Activated naive CD4-positive, alpha-beta T cell treated with anti-CD3 and anti-CD28 coated beads for 36 hours (primary cell): ENCODE measurements at regions of chr20 and their contacts with region 1.

Region 1: DNA sequence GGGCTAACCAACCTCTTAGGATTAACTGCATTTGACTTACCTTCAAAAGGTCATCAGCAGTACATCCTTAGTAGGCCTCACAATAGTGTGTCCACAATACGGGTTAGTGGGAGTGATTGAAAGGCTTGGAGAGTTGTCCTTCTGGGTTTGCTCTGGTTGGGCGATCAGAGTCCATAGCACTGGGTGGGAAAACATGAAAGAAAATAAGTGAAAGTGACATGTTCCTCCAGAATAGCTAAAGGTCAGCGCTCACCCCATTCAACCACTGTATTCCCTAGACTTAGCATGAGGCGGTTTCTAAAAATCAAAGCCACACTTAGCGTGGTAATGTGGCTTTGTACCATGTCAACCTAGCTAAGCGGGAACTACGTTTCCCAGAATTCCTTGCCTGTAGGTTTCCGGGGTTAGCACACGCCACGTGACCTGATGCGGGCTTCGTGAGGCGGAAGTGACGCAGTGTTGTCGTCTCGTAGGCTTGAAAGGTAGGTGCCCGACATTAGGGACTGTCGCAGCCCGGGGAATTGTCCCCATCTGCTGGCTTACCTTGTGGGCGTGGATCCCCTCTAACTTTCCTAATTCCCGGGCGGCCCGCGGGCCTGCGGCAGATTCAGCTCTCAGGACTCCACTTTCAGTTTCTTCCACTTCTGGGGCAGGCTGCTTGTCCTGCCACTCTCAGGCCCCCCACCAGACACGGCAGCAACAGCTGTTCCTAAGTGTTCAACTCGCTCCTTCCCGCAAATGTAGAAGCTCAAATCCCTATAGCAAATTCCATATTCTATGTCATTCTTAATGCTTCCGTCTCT is 19.8 kb upstream of the SCP2D1 start:
- DNase-seq: peak; percentile 93
- H3K4me3 Mint-ChIP-seq: peak overlapping the region; percentile 91
- H3K27ac Mint-ChIP-seq: peak overlapping the region; percentile 94
- H3K4me1 Mint-ChIP-seq: peaks cover 12% of the 10 kb centered on the region
- H3K27me3 Mint-ChIP-seq: peaks cover 8% of the 10 kb centered on the region

Region 2: GRCh38 chr20:18587665-18588573 is 205.9 kb before region 1 on chr20 and contains the start of gene DTD1:
- CTCF ChIA-PET with region 1: no interaction called
- intact Hi-C with region 1: loop called (anchors 5 kb)
- DNase-seq: peak; percentile 89
- H3K4me3 Mint-ChIP-seq: peak within 1 kb of the TSS; percentile 87
- H3K27ac Mint-ChIP-seq: peak within 1 kb of the TSS; percentile 59
- H3K4me1 Mint-ChIP-seq: peaks cover 23% of the 10 kb centered on the region
- H3K27me3 Mint-ChIP-seq: no peaks in the 10 kb centered on the region
- total RNA-seq, gene DTD1: 46.4 to 47.1 TPM

Region 3: DNA sequence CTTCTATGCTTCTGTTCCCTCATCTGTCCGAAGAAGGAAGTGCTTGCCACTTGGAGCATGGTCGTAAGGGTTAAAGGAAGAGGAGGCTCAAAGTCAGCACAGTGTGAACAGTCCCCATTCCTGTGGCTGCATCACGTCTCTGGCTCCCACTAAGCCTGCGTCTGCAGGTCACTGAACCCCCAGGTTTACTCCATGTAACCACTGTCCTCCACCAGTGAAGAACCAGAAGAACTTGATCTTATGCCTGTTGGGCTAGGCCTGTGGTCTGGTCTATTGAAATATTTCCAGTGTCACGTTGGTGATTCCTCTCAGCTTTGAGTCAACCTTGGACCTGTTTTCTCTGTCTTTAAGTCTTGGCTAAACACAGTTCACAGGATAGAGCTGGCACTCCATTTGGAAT is 26.1 kb before region 1 on chr20:
- CTCF ChIA-PET with region 1: no interaction called
- intact Hi-C with region 1: no loop called
- DNase-seq: no peak
- H3K4me3 Mint-ChIP-seq: no peak overlapping the region
- H3K27ac Mint-ChIP-seq: no peak overlapping the region
- H3K4me1 Mint-ChIP-seq: no peaks in the 10 kb centered on the region
- H3K27me3 Mint-ChIP-seq: no peaks in the 10 kb centered on the region

Region 4: DNA sequence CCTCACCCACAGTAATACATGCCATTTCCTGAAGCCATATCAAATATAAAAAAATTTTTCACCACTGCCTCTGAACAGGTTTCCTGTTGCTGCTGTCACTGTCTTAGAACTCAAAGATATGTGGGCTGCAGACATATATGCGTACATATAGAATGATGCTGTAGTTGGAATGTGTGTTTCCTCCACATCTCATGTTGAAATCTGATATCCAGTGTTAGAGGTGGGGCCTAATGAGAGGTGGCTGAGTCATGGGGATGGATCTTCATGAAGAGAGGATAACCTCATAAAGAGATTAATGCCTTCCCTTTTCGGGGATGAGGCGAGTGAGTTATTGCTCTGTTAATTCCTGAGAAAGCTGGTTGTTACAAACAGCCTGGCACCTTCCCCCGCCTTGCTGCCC is 12.1 kb after region 1 on chr20:
- CTCF ChIA-PET with region 1: no interaction called
- intact Hi-C with region 1: no loop called
- DNase-seq: no peak
- H3K4me3 Mint-ChIP-seq: no peak overlapping the region
- H3K27ac Mint-ChIP-seq: no peak overlapping the region
- H3K4me1 Mint-ChIP-seq: peaks cover 17% of the 10 kb centered on the region
- H3K27me3 Mint-ChIP-seq: no peaks in the 10 kb centered on the region